GM12878 (cell line): ENCODE measurements at regions of chr17 and their contacts with region 1.

Region 1: DNA sequence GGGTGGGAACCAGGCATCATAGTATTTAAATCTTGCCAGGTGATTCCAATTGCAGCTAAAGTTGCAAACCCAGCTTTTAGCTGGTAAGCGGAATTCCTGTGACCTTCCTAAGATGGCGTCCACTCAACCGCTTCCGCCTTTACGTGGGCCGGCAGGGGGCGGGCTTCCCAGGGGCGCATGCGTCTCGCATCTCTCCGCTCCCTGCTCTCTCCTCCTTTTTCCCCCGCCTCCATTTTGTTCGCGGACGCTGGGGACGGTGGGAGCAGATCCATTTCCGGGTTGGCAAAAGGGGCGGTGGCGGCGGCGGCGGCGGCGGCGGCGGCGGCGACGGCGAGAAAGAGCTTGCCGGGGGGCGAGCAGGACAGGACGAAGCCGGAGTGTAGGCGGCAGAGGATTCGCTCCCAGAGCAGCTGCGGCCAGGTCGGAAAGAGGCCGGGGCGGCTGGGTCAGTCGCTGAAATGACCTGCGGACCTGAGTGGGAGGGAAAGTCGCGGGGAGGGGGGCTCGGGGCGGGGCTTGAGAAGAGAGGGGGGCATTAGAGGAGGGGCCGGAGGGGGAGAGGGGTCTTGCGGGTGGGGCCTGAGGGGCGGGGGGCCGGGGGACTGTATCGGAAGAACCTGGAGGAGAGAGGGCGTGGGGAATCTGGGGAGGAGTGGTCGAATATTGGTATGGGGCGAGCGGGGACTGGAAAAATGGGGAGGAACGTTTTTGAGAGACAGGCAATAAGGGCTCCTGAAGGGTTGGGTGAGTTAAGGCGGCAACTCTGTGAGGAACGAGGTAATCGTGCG is at the start of gene WIPF2:
- DNase-seq: peak; percentile 87
- ATAC-seq: peak; percentile 96
- H3K4me3 ChIP-seq: peak within 1 kb of the TSS; percentile 99
- H3K27ac ChIP-seq: peak within 1 kb of the TSS; percentile 73
- H3K4me1 ChIP-seq: peaks cover 4% of the 10 kb centered on the region; the same call in 1 of the 2 replicates
- H3K27me3 ChIP-seq: no peaks in the 10 kb centered on the region
- CTCF ChIP-seq: peak; percentile 33 to 45 (median 37); a peak in 4 of 6 replicates
- EP300 ChIP-seq: no peak
- POLR2A ChIP-seq: peak; percentile 82
- RAD21 ChIP-seq: no peak
- polyA plus RNA-seq, gene WIPF2: 4.2 to 5.5 TPM

Region 2: DNA sequence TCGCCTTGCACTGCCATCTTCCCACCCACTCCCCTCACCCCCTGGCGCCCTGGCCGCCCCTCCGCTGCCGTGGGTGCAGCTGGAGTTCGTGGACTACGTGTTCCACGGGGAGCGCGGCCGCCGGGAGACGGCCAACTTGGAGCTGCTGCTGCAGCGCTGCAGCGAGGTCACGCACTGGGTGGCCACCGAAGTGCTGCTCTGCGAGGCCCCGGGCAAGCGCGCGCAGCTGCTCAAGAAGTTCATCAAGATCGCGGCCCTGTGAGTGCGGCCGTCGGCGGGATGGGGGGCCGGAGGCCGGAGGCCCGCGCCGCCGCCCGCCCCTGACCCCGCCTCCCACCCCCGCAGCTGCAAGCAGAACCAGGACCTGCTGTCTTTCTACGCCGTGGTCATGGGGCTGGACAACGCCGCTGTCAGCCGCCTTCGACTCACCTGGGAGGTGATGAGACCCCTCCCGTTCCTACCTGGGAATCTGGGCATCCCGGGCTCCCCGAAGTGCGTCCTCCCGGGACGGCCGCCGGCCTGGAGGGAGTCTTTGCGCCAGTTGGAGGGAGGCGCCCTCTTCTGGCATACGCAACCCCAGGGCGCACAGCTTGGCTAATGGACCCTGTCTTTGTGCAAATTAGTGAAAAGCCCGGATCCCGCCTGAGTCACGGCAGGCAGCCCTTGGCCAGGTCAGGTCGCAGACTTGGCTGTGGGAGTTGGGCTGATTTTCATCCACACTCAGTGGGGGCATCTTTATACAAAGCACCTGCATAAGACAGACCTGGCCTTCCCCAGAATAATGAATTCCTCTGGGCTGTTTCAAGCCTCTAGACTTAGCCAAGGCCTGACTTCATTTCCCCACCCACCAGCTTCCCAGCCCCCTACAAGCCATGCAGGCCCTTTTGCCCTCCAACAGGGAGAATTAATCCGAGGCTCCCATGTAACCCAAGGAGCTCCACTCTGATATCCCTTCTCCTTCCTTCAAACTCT is 27.7 kb before region 1 on chr17:
- CTCF ChIA-PET with region 1: interaction called, 10 read pairs
- POLR2A ChIA-PET with region 1: interaction called, 4 read pairs
- RAD21 ChIA-PET with region 1: interaction called, 4 read pairs
- SMC1A ChIA-PET with region 1: interaction called, 3 read pairs
- in situ Hi-C with region 1: no loop called
- intact Hi-C with region 1: no loop called
- DNase-seq: peak; percentile 30
- ATAC-seq: peak; percentile 93
- H3K4me3 ChIP-seq: peak overlapping the region; percentile 83
- H3K27ac ChIP-seq: no peak overlapping the region
- H3K4me1 ChIP-seq: peaks cover 24% of the 10 kb centered on the region
- H3K27me3 ChIP-seq: no peaks in the 10 kb centered on the region; a peak in 1 of 4 replicates
- CTCF ChIP-seq: peak; percentile 82 to 91 (median 89)
- EP300 ChIP-seq: no peak
- POLR2A ChIP-seq: peak; percentile 57
- RAD21 ChIP-seq: peak; percentile 50; the same call in 1 of the 2 replicates

Region 3: DNA sequence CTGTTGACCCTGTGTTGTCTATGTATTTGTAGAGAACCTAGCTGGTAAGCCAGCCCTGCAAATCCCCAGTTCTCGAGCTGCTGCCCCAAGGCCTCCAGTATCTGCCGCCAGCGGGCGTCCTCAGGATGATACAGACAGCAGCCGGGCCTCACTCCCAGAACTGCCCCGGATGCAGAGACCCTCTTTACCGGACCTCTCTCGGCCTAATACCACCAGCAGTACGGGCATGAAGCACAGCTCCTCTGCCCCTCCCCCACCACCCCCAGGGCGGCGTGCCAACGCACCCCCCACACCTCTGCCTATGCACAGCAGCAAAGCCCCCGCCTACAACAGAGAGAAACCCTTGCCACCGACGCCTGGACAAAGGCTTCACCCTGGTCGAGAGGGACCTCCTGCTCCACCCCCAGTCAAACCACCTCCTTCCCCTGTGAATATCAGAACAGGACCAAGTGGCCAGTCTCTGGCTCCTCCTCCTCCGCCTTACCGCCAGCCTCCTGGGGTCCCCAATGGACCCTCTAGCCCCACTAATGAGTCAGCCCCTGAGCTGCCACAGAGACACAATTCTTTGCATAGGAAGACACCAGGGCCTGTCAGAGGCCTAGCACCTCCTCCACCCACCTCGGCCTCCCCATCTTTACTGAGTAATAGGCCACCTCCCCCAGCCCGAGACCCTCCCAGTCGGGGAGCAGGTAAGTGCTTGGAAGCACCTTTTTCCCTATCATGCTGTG is 45.4 kb after region 1 on chr17:
- CTCF ChIA-PET with region 1: no interaction called
- POLR2A ChIA-PET with region 1: no interaction called
- RAD21 ChIA-PET with region 1: no interaction called
- SMC1A ChIA-PET with region 1: no interaction called
- in situ Hi-C with region 1: no loop called
- intact Hi-C with region 1: no loop called
- DNase-seq: no peak
- ATAC-seq: no peak
- H3K4me3 ChIP-seq: no peak overlapping the region
- H3K27ac ChIP-seq: no peak overlapping the region
- H3K4me1 ChIP-seq: no peaks in the 10 kb centered on the region
- H3K27me3 ChIP-seq: no peaks in the 10 kb centered on the region
- CTCF ChIP-seq: no peak
- EP300 ChIP-seq: no peak
- POLR2A ChIP-seq: no peak
- RAD21 ChIP-seq: no peak

Region 4: DNA sequence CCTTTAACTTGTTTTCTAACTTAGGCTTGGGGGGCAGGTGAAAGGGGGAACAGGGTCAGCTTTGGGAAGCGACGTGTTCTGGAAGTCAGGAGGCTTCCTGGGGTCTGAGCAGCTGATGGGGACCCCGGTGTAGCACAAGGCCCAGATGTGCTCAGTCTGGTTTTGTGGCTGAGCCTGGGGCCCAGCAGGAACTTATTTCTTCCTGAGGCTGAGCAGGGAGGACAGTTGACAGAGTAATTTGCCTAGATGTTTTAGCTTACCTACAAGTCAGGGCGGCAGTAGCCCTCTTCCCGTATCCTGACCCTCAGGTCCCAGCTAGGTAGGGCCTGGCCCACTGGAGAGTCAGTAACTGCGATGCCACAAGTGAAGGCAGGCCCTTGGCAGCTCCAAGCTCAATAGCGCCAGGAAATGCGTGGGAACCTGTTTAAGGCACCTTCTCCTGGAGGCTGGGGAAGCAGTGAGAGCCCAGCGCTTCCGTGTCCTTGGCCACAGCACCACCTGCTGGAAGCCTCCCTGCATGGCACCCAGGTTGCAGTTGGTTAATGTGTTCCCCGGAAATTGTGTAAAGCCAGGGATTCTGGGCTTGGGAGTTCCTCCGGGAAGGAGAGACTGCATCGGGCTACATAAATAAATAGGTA is 340.8 kb after region 1 on chr17:
- CTCF ChIA-PET with region 1: no interaction called
- POLR2A ChIA-PET with region 1: no interaction called
- RAD21 ChIA-PET with region 1: no interaction called
- SMC1A ChIA-PET with region 1: no interaction called
- in situ Hi-C with region 1: no loop called
- intact Hi-C with region 1: no loop called
- DNase-seq: peak; percentile 72
- ATAC-seq: peak; percentile 5
- H3K4me3 ChIP-seq: peak overlapping the region; percentile 70
- H3K27ac ChIP-seq: peak overlapping the region; percentile 98
- H3K4me1 ChIP-seq: peaks cover 33% of the 10 kb centered on the region
- H3K27me3 ChIP-seq: no peaks in the 10 kb centered on the region
- CTCF ChIP-seq: peak; percentile 91 to 97 (median 94)
- EP300 ChIP-seq: no peak
- POLR2A ChIP-seq: no peak; the same call in 1 of the 2 replicates
- RAD21 ChIP-seq: peak; percentile 90

Region 5: GRCh38 chr17:42199416-42200011 is 1980.2 kb after region 1 on chr17:
- CTCF ChIA-PET with region 1: no interaction called
- POLR2A ChIA-PET with region 1: interaction called, 13 read pairs
- RAD21 ChIA-PET with region 1: no interaction called
- SMC1A ChIA-PET with region 1: no interaction called
- in situ Hi-C with region 1: no loop called
- intact Hi-C with region 1: no loop called
- DNase-seq: no peak
- ATAC-seq: peak; percentile 56
- H3K4me3 ChIP-seq: no peak overlapping the region
- H3K27ac ChIP-seq: no peak overlapping the region
- H3K4me1 ChIP-seq: no peaks in the 10 kb centered on the region; the same call in 1 of the 2 replicates
- H3K27me3 ChIP-seq: no peaks in the 10 kb centered on the region
- CTCF ChIP-seq: no peak
- EP300 ChIP-seq: no peak
- POLR2A ChIP-seq: no peak
- RAD21 ChIP-seq: no peak